Prostate gland (tissue), 2 donors: ENCODE measurements at regions of chr1 and their contacts with region 1.

Region 1: DNA sequence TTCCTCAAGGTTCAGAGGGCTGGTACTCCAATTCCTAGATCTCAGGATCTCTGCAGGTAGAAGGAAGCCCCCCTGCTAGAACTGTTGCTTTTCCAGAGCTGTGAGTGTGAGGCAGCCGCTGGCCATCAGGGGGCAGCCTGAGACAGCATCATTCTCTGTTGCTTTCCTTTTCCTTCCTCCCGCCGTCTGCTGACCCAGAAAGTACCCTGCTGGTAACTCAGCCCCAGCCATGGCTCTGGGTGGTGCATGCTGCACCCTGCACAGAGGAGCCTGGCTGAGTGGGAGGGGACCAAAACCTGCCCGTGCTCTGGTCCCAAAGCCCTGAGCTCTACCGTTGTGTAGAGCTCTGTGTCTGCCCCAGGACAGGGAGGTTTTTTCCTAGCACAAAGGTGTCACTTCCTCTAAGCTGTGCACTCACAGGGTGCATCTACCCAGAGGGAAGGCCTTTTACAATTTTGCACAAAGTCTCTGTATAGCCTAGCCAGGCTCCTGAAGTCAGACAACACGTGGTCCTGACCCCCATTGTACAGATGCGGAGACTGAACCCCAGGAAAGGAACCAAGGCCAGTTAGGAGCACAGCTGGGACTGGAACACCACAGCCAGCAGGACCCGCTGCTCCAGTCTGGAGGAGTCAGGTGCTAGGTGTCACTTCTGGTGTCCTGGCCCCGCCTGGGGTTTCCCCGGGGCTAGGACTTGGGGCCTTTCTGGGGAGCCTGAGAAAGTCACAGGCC is 5.6 kb upstream of the FAM131C start:
- DNase-seq: peak; percentile 71
- H3K4me3 ChIP-seq: no peak overlapping the region
- H3K27ac ChIP-seq: no peak overlapping the region
- H3K4me1 ChIP-seq: peaks cover 2% of the 10 kb centered on the region
- H3K27me3 ChIP-seq: no peaks in the 10 kb centered on the region
- CTCF ChIP-seq: peak; percentile 75 to 97 (median 90)
- POLR2A ChIP-seq: no peak

Region 2: GRCh38 chr1:16155532-16156410 is 76.7 kb after region 1 on chr1 and contains the start of gene EPHA2:
- intact Hi-C with region 1: loop called (anchors 2 kb)
- DNase-seq: peak; percentile 92
- H3K4me3 ChIP-seq: peak within 1 kb of the TSS; percentile 43 to 50
- H3K27ac ChIP-seq: peak within 1 kb of the TSS; percentile 69 to 76
- H3K4me1 ChIP-seq: no peaks in the 10 kb centered on the region
- H3K27me3 ChIP-seq: no peaks in the 10 kb centered on the region
- CTCF ChIP-seq: no peak
- POLR2A ChIP-seq: peak; percentile 98
- total RNA-seq, gene EPHA2: 14.8 to 17.7 TPM

Region 3: DNA sequence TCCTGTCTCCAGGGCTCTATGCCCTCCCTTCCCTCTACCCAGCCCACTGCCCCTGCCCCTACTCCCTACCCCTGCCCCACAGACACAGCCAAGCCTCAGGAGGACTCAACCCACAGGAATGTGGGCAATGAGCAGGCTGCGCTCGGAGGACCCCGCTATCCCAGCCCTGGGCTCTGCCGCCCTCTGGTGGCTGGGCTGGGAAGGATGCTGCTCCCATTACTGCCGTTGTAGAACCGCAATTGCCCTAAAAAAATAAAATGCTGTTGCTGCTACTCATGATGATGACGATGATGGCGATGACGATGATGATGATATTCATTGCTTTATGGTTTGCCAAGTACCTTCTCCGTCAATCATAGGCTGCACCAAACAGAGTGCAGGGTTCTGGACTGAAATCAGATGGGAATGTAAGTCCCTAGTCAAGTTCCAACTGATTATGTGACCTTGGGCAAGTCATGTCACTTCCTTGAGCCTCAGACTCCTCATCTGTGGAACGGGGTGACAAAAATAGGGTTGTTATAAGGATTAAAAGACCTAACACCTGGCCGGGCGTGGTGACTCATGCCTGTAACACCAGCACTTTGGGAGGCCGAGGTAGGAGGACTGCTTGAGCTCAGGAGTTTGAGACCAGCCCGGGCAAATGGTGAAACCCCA is 108.8 kb after region 1 on chr1:
- intact Hi-C with region 1: loop called (anchors 1 kb)
- DNase-seq: peak; percentile 59
- H3K4me3 ChIP-seq: no peak overlapping the region
- H3K27ac ChIP-seq: no peak overlapping the region
- H3K4me1 ChIP-seq: no peaks in the 10 kb centered on the region
- H3K27me3 ChIP-seq: no peaks in the 10 kb centered on the region
- CTCF ChIP-seq: peak; percentile 98
- POLR2A ChIP-seq: no peak

Region 4: GRCh38 chr1:16243936-16244649 is 165.0 kb after region 1 on chr1:
- intact Hi-C with region 1: loop called (anchors 5 kb)
- DNase-seq: peak; percentile 82
- H3K4me3 ChIP-seq: no peak overlapping the region
- H3K27ac ChIP-seq: peak overlapping the region in 1 of 2 donors; percentile 31
- H3K4me1 ChIP-seq: peaks cover 13% of the 10 kb centered on the region
- H3K27me3 ChIP-seq: no peaks in the 10 kb centered on the region
- CTCF ChIP-seq: peak; percentile 53 to 92 (median 80)
- POLR2A ChIP-seq: no peak

Region 5: GRCh38 chr1:16351994-16352841 is 273.1 kb after region 1 on chr1 and contains the start of gene FBXO42:
- intact Hi-C with region 1: loop called (anchors 5 kb)
- DNase-seq: peak; percentile 85
- H3K4me3 ChIP-seq: peak within 1 kb of the TSS; percentile 97 to 99
- H3K27ac ChIP-seq: peak within 1 kb of the TSS; percentile 96 to 98
- H3K4me1 ChIP-seq: peaks cover 3% of the 10 kb centered on the region
- H3K27me3 ChIP-seq: no peaks in the 10 kb centered on the region
- CTCF ChIP-seq: peak in 3 of 4 experiments; percentile 31 to 64 (median 61)
- POLR2A ChIP-seq: peak; percentile 97
- total RNA-seq, gene FBXO42: 26.6 to 52.6 TPM

Region 6: DNA sequence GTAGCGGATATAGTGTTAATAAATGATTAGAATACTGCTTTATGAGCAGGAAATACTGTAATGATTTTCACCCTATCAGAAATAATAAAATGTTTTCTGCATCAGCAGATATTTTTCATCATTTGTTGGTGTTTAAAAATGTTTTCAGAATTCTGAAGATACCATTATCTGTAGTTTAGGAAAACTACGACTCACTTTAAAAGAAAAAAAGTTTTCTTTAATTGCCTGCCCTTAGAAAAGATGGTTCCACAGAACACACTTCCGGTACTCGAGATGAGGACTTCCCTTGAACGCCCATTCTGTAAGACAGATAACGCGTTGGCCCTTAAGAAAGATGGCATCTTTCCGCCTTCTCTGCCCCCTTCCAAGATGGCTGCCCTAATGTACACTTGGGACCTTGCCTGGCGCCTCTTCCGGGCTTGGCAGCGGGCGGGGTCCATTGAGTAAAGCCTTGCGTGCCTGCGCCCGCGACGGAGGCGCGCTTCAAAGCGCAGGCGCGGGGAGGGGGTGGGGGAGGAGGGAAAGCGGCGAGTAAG is 287.7 kb after region 1 on chr1 and contains the start of gene SZRD1:
- intact Hi-C with region 1: loop called (anchors 5 kb)
- DNase-seq: peak; percentile 98
- H3K4me3 ChIP-seq: peak within 1 kb of the TSS; percentile 69
- H3K27ac ChIP-seq: peak within 1 kb of the TSS; percentile 97 to 98
- H3K4me1 ChIP-seq: peaks cover 6% of the 10 kb centered on the region
- H3K27me3 ChIP-seq: no peaks in the 10 kb centered on the region
- CTCF ChIP-seq: no peak
- POLR2A ChIP-seq: no peak
- total RNA-seq, gene SZRD1: 64.8 to 78.6 TPM